Esophagus squamous epithelium (tissue), 5 donors: ENCODE measurements at regions of chr4 and their contacts with region 1.

Region 1: GRCh38 chr4:88284439-88285234 is at the start of gene PPM1K:
- DNase-seq: peak; percentile 92
- H3K4me3 ChIP-seq: peak within 1 kb of the TSS; percentile 65 to 88 (median 78)
- H3K27ac ChIP-seq: peak within 1 kb of the TSS; percentile 96 to 100 (median 100)
- H3K4me1 ChIP-seq: peaks cover 7 to 56% (median 8%) of the 10 kb centered on the region in 3 donors
- H3K27me3 ChIP-seq: no peaks in the 10 kb centered on the region
- CTCF ChIP-seq: peak in 4 of 6 experiments; percentile 5 to 25 (median 18)
- POLR2A ChIP-seq: peak in 3 of 4 donors; percentile 64 to 90 (median 89)
- total RNA-seq, gene PPM1K: 4.4 to 34.0 (median 11.7) TPM

Region 2: DNA sequence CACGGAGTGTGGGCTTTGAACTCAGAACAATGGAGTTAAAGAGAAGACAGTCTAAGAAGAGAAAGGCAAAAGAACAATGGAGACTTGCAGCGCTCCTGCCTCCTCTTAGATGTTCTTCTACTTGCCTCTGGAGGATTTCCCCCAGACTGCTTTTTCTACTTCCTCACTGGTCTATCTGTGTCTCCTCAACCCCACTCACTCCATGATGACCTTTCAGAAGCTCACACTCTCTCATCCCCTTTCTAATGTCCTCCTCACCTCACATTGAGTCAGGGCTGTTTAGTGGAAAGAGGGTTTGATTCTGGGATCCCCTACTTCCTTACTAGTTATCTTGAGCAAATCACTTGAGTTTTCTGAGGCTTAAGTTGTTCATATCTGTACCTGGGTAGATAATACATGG is 81.8 kb after region 1 on chr4:
- intact Hi-C with region 1: loop called (anchors 10 kb)
- DNase-seq: no peak
- H3K4me3 ChIP-seq: no peak overlapping the region
- H3K27ac ChIP-seq: no peak overlapping the region
- H3K4me1 ChIP-seq: no peaks in the 10 kb centered on the region
- H3K27me3 ChIP-seq: no peaks in the 10 kb centered on the region
- CTCF ChIP-seq: no peak
- POLR2A ChIP-seq: no peak

Region 3: GRCh38 chr4:89420507-89420906 is 1135.9 kb after region 1 on chr4:
- intact Hi-C with region 1: no loop called
- DNase-seq: no peak
- H3K4me3 ChIP-seq: no peak overlapping the region
- H3K27ac ChIP-seq: no peak overlapping the region
- H3K4me1 ChIP-seq: no peaks in the 10 kb centered on the region
- H3K27me3 ChIP-seq: no peaks in the 10 kb centered on the region
- CTCF ChIP-seq: no peak
- POLR2A ChIP-seq: no peak